ENCODE measurements at regions of chr21 and their contacts with region 1.

Region 1: DNA sequence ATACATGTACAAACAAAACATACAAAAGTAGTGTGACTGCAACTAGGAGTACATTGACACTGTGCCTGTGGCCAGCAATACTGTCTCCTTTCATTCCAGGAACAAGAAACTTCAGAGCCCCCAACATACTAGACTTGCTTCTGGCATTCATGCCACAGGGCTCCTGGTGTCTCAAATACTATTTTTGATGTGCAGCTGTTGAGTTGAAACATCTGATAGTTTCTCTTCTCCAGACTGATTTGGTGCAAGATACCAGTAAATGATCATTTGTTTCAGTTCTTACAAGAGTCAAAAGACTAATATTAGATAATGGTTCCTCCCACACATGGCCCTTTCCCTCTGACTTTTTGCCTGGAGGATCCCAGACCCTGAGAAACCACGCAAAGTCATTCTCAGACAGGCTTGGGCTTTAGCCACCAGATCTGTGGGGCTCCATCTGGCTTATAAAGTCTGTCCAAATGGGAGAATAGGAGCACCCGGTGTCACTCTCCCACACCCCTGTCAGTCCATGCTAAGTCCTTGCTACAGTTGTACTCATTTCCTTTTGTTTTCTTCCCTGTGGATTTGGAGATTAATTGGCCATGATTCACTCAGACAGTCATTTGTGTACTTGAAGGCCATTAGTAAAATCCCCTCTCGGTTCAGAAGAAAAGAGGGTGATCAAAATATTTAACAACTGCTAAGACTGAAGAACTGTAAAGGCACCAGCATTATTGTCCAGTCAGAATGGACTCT is 163.5 kb upstream of the RUNX1 start:
- DNase-seq: peak in 3 of 5 donors; percentile 28 to 42 (median 38)
- ATAC-seq: peak in 2 of 4 donors; percentile 56 to 69
- H3K4me3 ChIP-seq: no peak overlapping the region
- H3K27ac ChIP-seq: peak overlapping the region in 8 of 12 donors; percentile 7 to 61 (median 46)
- H3K4me1 ChIP-seq: peaks cover 0 to 38% (median 10%) of the 10 kb centered on the region in 12 donors
- H3K27me3 ChIP-seq: no peaks in the 10 kb centered on the region
- CTCF ChIP-seq: no peak
- POLR2A ChIP-seq: no peak

Region 2: GRCh38 chr21:35256467-35256988 is 44.0 kb after region 1 on chr21:
- intact Hi-C with region 1: loop called in 1 of 10 experiments (anchors 5 kb)
- DNase-seq: peak; percentile 81 to 94 (median 82)
- ATAC-seq: peak; percentile 90 to 98 (median 96)
- H3K4me3 ChIP-seq: peak overlapping the region in 8 of 12 donors; percentile 3 to 34 (median 14)
- H3K27ac ChIP-seq: peak overlapping the region in 11 of 12 donors; percentile 40 to 80 (median 64)
- H3K4me1 ChIP-seq: peaks cover 4 to 29% (median 18%) of the 10 kb centered on the region in 12 donors
- H3K27me3 ChIP-seq: no peaks in the 10 kb centered on the region
- CTCF ChIP-seq: no peak
- POLR2A ChIP-seq: no peak